Activated CD8-positive, alpha-beta T cell treated with anti-CD3 and anti-CD28 coated beads, Interleukin-2, amount 10 ng/mL, durations not matched to agents 7 days and 5 days (primary cell): ENCODE measurements at regions of chr16 and their contacts with region 1.

Region 1: GRCh38 chr16:75566040-75566810 is at the start of gene GABARAPL2:
- DNase-seq: peak; percentile 92
- ATAC-seq: peak; percentile 79
- H3K4me3 Mint-ChIP-seq: peak within 1 kb of the TSS; percentile 97
- H3K27ac Mint-ChIP-seq: peak within 1 kb of the TSS; percentile 90
- H3K4me1 Mint-ChIP-seq: peaks cover 39% of the 10 kb centered on the region
- H3K27me3 Mint-ChIP-seq: peaks cover 14% of the 10 kb centered on the region
- total RNA-seq, gene GABARAPL2: 57.3 to 59.6 TPM

Region 2: GRCh38 chr16:75541236-75541635 is 25.0 kb before region 1 on chr16:
- CTCF ChIA-PET with region 1: no interaction called
- POLR2A ChIA-PET with region 1: no interaction called
- DNase-seq: no peak
- ATAC-seq: no peak
- H3K4me3 Mint-ChIP-seq: no peak overlapping the region
- H3K27ac Mint-ChIP-seq: no peak overlapping the region
- H3K4me1 Mint-ChIP-seq: no peaks in the 10 kb centered on the region
- H3K27me3 Mint-ChIP-seq: no peaks in the 10 kb centered on the region

Region 3: DNA sequence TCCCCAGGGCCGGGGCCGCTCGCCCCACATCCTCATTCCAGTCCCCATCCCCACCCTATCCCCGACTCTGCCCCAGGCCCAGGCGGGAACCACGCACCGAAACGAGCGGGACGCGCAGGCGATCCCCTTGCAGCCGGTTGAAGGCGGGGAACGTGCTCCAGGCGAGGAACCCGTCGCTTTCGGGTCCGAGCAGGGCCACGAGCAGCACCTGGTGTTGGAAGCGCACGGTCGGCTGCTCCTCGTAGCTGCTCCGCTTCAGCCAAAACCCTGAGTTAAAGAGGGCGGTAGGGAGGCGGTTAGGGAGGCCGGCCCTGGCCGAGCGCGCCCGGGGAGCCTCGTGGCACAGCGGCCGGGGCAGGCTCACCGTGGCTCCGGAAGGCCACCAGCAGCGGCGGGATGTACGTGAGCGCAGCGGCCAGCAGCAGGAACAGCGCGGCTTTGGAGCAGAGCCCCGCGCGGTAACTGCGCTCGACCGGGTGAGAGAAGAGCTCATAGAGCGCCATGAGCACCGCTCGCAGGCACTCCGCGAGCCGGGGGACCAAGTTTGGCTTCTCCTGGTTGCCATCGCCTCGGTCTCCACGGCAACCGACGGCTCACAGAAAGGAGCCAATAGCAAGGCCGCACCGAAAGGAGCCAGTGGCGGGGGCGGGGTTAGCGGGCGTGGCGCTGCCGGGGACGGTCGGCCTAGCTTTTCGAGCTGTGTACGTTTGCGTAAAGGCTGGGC is 10.4 kb before region 1 on chr16 and contains the start of gene TMEM231:
- CTCF ChIA-PET with region 1: interaction called, 7 read pairs
- POLR2A ChIA-PET with region 1: interaction called, 18 read pairs
- DNase-seq: peak; percentile 98
- ATAC-seq: peak; percentile 96
- H3K4me3 Mint-ChIP-seq: peak within 1 kb of the TSS; percentile 84
- H3K27ac Mint-ChIP-seq: peak within 1 kb of the TSS; percentile 73
- H3K4me1 Mint-ChIP-seq: peaks cover 9% of the 10 kb centered on the region
- H3K27me3 Mint-ChIP-seq: peaks cover 19% of the 10 kb centered on the region
- total RNA-seq, gene TMEM231: 2.1 to 2.3 TPM

Region 4: GRCh38 chr16:75599452-75600277 is 33.4 kb after region 1 on chr16:
- CTCF ChIA-PET with region 1: no interaction called
- POLR2A ChIA-PET with region 1: no interaction called
- DNase-seq: no peak
- ATAC-seq: no peak
- H3K4me3 Mint-ChIP-seq: no peak overlapping the region
- H3K27ac Mint-ChIP-seq: no peak overlapping the region
- H3K4me1 Mint-ChIP-seq: peaks cover 5% of the 10 kb centered on the region
- H3K27me3 Mint-ChIP-seq: no peaks in the 10 kb centered on the region

Region 5: DNA sequence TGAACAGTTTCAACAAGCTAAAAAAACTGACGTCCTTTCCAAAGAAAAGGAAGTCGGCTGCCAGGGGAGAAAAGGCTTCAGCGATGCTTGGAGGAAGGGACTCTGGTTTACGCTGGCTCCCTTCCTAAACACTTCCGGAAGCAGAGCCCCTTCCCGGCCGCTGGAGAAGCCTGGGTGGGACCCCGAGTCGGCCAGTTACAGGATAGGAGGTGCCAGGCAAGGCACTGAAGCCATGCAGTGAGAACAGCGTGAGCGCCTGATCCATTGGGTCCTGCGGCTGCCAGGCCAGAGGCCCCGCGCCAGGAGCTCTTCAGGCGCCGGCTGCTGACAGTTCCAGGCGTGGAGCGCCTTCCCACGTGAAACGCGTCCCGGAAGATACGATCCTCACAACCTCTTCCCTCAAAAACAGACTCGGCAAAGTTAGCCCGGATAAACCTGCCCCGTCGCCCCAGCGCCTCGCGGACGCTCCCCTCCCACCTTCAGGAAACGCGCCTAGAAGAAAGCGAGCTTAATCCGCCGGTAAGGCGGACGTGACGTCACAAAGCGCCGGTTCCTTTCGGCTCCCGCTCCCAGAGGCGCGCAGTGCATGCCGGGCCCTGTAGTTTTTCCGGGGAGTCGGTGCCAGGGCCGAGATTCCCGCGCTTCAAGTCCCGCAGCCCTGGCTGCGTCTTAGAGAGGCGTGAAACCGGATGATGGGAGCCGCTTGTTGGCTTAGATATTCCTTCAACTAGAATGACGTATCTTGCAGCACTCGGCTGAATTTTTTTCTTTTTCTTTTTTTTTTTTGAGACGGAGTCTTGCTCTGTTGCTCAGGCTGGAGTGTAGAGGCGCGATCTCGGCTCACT is 56.8 kb after region 1 on chr16 and contains the start of gene ADAT1:
- CTCF ChIA-PET with region 1: interaction called, 9 read pairs
- POLR2A ChIA-PET with region 1: interaction called, 16 read pairs
- DNase-seq: peak; percentile 99
- ATAC-seq: peak; percentile 95
- H3K4me3 Mint-ChIP-seq: peak within 1 kb of the TSS; percentile 93
- H3K27ac Mint-ChIP-seq: peak within 1 kb of the TSS; percentile 98
- H3K4me1 Mint-ChIP-seq: peaks cover 38% of the 10 kb centered on the region
- H3K27me3 Mint-ChIP-seq: no peaks in the 10 kb centered on the region
- total RNA-seq, gene ADAT1: 51.8 to 51.9 TPM